ENCODE measurements at regions of chr2 and their contacts with region 1.

Region 1: GRCh38 chr2:69026026-69026425 is 13.0 kb downstream of the ANTXR1 start:
- DNase-seq: no peak
- H3K4me3 ChIP-seq: no peak overlapping the region
- CTCF ChIP-seq: peak; percentile 17

Region 2: GRCh38 chr2:69306822-69307578 is 281.0 kb after region 1 on chr2:
- CTCF ChIA-PET with region 1: interaction called, 15 read pairs
- POLR2A ChIA-PET with region 1: no interaction called
- DNase-seq: no peak
- H3K4me3 ChIP-seq: peak overlapping the region; percentile 58
- CTCF ChIP-seq: peak; percentile 97

Measured in AG04449 (cell line).